Activated naive CD4-positive, alpha-beta T cell treated with anti-CD3 and anti-CD28 coated beads, Interleukin-2, amount 10 ng/mL, durations not matched to agents 7 days and 5 days (primary cell): ENCODE measurements at regions of chrX and their contacts with region 1.

Region 1: GRCh38 chrX:129925305-129926092 is 19.5 kb downstream of the UTP14A start:
- DNase-seq: peak; percentile 78
- H3K4me3 Mint-ChIP-seq: no peak overlapping the region
- H3K27ac Mint-ChIP-seq: peak overlapping the region; percentile 25
- H3K4me1 Mint-ChIP-seq: peaks cover 5% of the 10 kb centered on the region
- H3K27me3 Mint-ChIP-seq: no peaks in the 10 kb centered on the region

Region 2: DNA sequence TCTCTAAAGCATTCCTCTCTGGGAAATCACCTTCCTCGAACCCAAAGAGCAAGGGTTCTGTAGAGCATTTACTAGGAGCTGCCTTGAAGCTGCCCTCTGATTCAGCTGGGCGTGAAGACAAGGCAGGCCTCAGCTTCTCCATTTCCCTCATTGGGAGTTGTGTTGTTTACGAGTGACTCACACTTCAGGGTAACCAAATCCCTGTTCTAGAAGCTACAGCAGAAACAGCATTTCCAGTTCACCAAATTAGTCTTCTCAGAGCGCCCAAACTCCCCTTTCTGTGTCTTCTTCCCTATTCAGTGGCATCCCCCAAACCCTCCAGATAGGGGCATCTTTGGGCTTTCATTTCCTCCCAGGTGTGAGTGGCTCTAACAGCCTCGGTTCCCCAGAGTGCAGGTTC is 187.6 kb before region 1 on chrX:
- CTCF ChIA-PET with region 1: no interaction called
- DNase-seq: no peak
- H3K4me3 Mint-ChIP-seq: no peak overlapping the region
- H3K27ac Mint-ChIP-seq: peak overlapping the region; percentile 52
- H3K4me1 Mint-ChIP-seq: peaks cover 61% of the 10 kb centered on the region
- H3K27me3 Mint-ChIP-seq: no peaks in the 10 kb centered on the region

Region 3: GRCh38 chrX:129996120-129996519 is 70.6 kb after region 1 on chrX:
- CTCF ChIA-PET with region 1: no interaction called
- DNase-seq: no peak
- H3K4me3 Mint-ChIP-seq: no peak overlapping the region
- H3K27ac Mint-ChIP-seq: no peak overlapping the region
- H3K4me1 Mint-ChIP-seq: no peaks in the 10 kb centered on the region
- H3K27me3 Mint-ChIP-seq: no peaks in the 10 kb centered on the region

Region 4: DNA sequence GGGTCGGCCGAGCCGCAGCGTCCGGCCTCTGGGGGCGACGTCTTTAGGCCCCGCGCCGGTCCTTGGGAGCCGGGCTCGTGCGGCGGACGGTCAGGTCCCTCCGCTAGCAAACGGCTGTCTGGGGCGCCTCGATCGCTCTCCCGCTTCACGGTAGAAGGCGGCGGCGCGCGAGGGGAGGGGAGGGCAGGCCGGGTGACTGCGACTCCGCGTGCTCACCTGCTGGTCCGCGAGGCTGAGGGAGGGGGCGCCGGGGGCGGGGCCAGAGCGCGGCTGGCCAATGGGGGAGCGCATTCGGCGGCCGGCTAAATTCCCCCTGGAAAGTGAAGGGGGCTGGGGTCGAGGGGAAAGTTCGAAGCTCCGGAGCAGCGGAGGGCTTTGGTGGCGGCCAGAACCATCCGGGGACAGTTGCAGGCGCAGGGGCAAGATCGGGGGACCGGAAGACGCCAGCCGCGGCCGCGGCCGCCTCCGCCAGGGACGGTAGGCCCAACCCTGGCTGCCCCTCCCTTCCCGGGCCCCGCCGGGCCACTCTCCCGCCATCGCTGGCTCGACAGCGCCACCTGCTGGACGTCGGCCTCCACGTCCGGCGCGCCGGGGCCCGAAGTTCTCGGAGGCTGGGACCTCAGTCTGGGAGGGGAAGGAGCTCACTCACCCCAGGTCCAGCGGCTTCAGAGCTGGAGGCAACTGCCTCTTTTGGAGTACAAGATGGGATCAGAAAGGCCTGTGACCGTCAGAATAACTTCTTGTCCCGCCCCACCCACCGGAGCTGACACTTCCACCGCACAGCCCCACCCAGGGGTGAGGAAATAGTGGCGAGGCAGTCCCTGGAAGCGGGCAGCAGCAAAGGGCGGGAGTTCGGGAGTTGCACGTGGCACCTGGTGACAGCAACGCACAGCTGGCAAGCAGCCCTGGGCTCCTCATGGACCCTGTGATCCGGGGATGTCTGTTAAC is 134.9 kb after region 1 on chrX:
- CTCF ChIA-PET with region 1: interaction called, 67 read pairs
- DNase-seq: peak; percentile 83
- H3K4me3 Mint-ChIP-seq: peak overlapping the region; percentile 65
- H3K27ac Mint-ChIP-seq: no peak overlapping the region
- H3K4me1 Mint-ChIP-seq: peaks cover 6% of the 10 kb centered on the region
- H3K27me3 Mint-ChIP-seq: peaks cover 4% of the 10 kb centered on the region